ENCODE measurements at regions of chr14 and their contacts with region 1.

Region 1: DNA sequence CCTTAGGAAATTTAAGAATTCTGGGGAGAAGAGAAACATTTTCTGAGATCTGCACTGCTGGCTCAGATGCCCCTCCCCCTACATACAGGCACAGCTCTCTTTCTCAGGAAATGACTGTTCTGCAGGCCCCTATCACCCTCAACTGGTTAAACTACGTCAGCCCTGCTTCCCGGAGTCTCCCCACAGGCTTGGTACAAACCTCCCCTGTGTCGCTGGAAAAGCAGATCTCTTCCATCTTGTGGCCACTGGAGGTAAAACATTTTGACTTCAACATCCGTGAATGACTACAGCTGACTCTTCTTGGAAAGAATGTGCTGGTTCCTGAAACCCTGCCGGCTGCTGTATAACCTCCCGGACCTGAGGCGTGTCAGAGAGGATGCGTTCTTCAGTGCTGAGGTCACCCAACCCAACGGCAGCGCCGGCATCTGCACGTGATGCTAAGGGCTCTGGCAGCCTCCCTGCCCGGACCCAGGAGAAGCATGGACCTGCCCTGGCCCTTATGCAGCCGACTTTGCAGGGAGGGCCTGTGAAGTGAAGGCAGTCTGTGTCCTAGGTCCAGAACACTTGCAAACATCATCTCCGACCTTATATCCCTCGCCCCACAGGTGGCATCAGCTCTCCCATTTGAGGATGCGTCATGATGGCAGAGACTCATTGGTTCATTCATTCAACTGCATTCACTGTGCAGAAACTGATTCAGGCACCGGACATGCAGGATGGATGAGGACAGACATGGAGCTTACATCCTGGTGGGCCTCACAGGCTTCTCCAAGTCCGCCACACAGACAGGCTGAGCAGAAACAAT is 129.3 kb downstream of the GCH1 start:
- DNase-seq: peak; percentile 91
- H3K4me3 Mint-ChIP-seq: peak overlapping the region; percentile 44
- H3K27ac Mint-ChIP-seq: peak overlapping the region; percentile 80
- H3K4me1 Mint-ChIP-seq: peaks cover 42% of the 10 kb centered on the region
- H3K27me3 Mint-ChIP-seq: peaks cover 4% of the 10 kb centered on the region

Region 2: DNA sequence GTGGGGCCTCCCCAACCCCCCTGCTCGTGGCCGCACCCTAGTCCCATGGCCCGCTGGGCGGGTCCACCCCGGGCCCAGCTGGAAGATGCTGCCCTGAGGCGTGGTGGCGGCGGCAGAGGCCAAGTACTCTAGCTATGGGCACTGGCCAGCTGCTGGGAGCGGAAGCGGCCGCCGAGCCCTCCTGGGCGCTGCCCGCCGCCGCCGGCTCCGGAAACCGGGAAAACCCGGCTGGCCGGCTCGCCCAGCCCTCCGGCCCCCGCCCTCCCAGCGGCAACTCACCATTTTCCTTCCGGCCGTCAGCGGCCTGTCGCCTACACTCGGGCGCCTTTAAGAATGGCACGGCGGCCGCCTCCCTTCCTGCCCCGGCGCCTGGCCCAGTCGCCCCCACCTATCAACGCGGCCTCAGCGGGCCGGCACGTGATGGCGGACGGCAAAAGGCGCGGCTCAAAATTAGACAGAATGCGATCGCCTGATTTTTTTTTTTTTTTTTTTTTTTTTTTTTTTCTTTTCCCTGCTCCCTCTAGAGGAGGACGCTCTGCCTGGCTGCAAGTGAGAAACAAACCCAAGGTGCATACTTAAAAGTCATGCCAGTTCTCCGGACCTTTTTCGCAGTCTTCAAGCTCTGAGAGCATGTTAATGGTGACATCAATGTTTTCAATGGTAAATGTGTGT is 284.6 kb before region 1 on chr14 and contains the start of gene GMFB:
- CTCF ChIA-PET with region 1: interaction called, 7 read pairs
- POLR2A ChIA-PET with region 1: no interaction called
- intact Hi-C with region 1: loop called (anchors 1 kb)
- DNase-seq: peak; percentile 94
- H3K4me3 Mint-ChIP-seq: peak within 1 kb of the TSS; percentile 89
- H3K27ac Mint-ChIP-seq: peak within 1 kb of the TSS; percentile 90
- H3K4me1 Mint-ChIP-seq: peaks cover 55% of the 10 kb centered on the region
- H3K27me3 Mint-ChIP-seq: no peaks in the 10 kb centered on the region
- total RNA-seq, gene GMFB: 39.0 to 43.6 TPM

Region 3: DNA sequence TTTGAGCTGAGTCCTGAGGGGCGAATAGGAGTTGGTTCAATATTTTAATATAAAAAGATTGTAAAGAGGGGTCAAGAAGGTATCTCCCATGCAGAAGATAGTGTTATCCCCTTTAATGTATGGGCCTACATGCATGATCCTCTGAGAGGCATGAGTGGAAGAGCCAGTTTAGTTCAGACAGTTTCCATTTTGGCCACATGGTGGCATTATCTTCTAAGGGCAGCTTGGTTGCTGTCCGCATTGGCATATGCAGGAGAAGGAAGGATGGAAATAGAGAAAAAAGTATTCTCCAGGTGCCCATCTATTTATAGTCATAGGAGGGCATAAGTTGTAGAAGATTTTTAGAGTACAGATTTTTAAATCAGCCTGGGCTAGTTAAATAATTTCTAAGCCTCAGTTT is 201.1 kb before region 1 on chr14:
- CTCF ChIA-PET with region 1: interaction called, 296 read pairs
- POLR2A ChIA-PET with region 1: interaction called, 45 read pairs
- intact Hi-C with region 1: no loop called
- DNase-seq: peak; percentile 31
- H3K4me3 Mint-ChIP-seq: no peak overlapping the region
- H3K27ac Mint-ChIP-seq: no peak overlapping the region
- H3K4me1 Mint-ChIP-seq: peaks cover 17% of the 10 kb centered on the region
- H3K27me3 Mint-ChIP-seq: peaks cover 6% of the 10 kb centered on the region

Region 4: GRCh38 chr14:54691525-54692283 is 81.7 kb before region 1 on chr14:
- CTCF ChIA-PET with region 1: interaction called, 15 read pairs
- POLR2A ChIA-PET with region 1: interaction called, 3 read pairs
- intact Hi-C with region 1: loop called (anchors 1 kb)
- DNase-seq: peak; percentile 75
- H3K4me3 Mint-ChIP-seq: no peak overlapping the region
- H3K27ac Mint-ChIP-seq: no peak overlapping the region
- H3K4me1 Mint-ChIP-seq: peaks cover 15% of the 10 kb centered on the region
- H3K27me3 Mint-ChIP-seq: peaks cover 8% of the 10 kb centered on the region

Region 5: GRCh38 chr14:54730156-54730961 is 43.0 kb before region 1 on chr14:
- CTCF ChIA-PET with region 1: interaction called, 74 read pairs
- POLR2A ChIA-PET with region 1: interaction called, 17 read pairs
- intact Hi-C with region 1: loop called (anchors 1 kb)
- DNase-seq: peak; percentile 63
- H3K4me3 Mint-ChIP-seq: peak overlapping the region; percentile 38
- H3K27ac Mint-ChIP-seq: peak overlapping the region; percentile 90
- H3K4me1 Mint-ChIP-seq: peaks cover 38% of the 10 kb centered on the region
- H3K27me3 Mint-ChIP-seq: peaks cover 12% of the 10 kb centered on the region

Region 6: GRCh38 chr14:54787261-54787660 is 13.9 kb after region 1 on chr14:
- CTCF ChIA-PET with region 1: interaction called, 35 read pairs
- POLR2A ChIA-PET with region 1: no interaction called
- intact Hi-C with region 1: no loop called
- DNase-seq: no peak
- H3K4me3 Mint-ChIP-seq: no peak overlapping the region
- H3K27ac Mint-ChIP-seq: no peak overlapping the region
- H3K4me1 Mint-ChIP-seq: no peaks in the 10 kb centered on the region
- H3K27me3 Mint-ChIP-seq: no peaks in the 10 kb centered on the region

Region 7: DNA sequence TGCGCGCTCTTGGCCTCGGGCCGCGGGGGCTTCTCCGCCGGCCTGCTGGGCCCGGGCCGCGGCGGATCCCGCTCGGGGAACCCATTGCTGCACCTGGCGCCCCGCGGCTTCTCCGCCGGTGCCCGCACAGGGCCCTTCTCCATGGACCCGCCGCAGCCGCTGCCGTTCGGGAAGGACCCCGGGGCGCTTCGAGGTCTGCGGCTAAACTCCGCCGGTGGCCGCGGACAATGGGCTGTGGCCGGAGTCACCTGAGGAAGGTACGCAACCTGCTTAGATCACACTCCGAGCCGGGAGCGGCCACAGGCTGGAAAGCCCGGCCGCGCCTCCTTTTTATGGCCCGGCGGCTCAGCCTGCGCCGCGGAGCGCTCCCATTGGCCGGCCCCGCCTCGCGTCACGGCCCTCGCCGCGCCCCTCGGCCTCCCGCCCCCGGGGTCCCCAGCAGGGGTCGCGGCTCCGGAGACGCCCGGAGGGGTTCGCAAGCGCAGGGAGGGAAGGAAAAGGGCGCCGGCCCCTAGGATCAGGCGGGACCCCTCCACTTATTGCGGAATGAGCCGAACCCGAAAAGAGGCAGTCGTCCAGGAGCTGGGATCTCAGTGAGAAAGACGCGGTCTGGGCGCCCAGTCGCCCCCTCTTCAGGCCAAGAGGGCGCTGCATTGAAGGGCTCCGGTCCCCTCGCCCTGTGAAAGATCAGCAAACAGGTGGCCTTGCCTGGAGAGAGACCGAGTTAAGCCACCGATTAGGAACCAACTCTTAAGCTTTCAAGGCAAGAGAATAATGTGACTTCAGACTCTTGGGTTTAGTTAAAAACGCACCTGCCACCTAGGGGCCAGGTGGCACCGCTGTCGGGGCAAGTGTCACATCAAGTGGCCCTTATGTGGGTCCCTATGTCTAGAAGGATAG is 129.4 kb after region 1 on chr14 and contains the start of gene GCH1:
- CTCF ChIA-PET with region 1: no interaction called
- POLR2A ChIA-PET with region 1: no interaction called
- intact Hi-C with region 1: loop called (anchors 2 kb)
- DNase-seq: peak; percentile 78
- H3K4me3 Mint-ChIP-seq: peak within 1 kb of the TSS; percentile 87
- H3K27ac Mint-ChIP-seq: peak within 1 kb of the TSS; percentile 87
- H3K4me1 Mint-ChIP-seq: peaks cover 26% of the 10 kb centered on the region
- H3K27me3 Mint-ChIP-seq: no peaks in the 10 kb centered on the region
- total RNA-seq, gene GCH1: 40.8 to 42.3 TPM

Region 8: GRCh38 chr14:55000381-55000780 is 227.0 kb after region 1 on chr14:
- CTCF ChIA-PET with region 1: no interaction called
- POLR2A ChIA-PET with region 1: no interaction called
- intact Hi-C with region 1: no loop called
- DNase-seq: no peak
- H3K4me3 Mint-ChIP-seq: no peak overlapping the region
- H3K27ac Mint-ChIP-seq: no peak overlapping the region
- H3K4me1 Mint-ChIP-seq: no peaks in the 10 kb centered on the region
- H3K27me3 Mint-ChIP-seq: no peaks in the 10 kb centered on the region

Measured in activated CD4-positive, alpha-beta memory T cell treated with anti-CD3 and anti-CD28 coated beads for 36 hours (primary cell).